ENCODE measurements at regions of chr3 and their contacts with region 1.

Region 1: GRCh38 chr3:105366326-105367062 is at the start of gene ALCAM:
- DNase-seq: peak; percentile 88
- ATAC-seq: peak; percentile 61
- H3K4me3 ChIP-seq: peak within 1 kb of the TSS; percentile 78 to 91 (median 88)
- H3K4me3 Mint-ChIP-seq: peak within 1 kb of the TSS; percentile 99
- H3K27ac ChIP-seq: peak within 1 kb of the TSS; percentile 98
- H3K27ac Mint-ChIP-seq: peak within 1 kb of the TSS; percentile 100
- H3K4me1 ChIP-seq: peaks cover 14 to 17% of the 10 kb centered on the region in 2 donors
- H3K4me1 Mint-ChIP-seq: peaks cover 32% of the 10 kb centered on the region
- H3K27me3 ChIP-seq: peaks cover 0 to 5% (median 0%) of the 10 kb centered on the region in 4 experiments
- H3K27me3 Mint-ChIP-seq: no peaks in the 10 kb centered on the region
- CTCF ChIP-seq: peak; percentile 1
- total RNA-seq, gene ALCAM: 23.8 and 25.5 TPM in 2 replicates

Region 2: GRCh38 chr3:104273046-104273649 is 1093.3 kb before region 1 on chr3:
- CTCF ChIA-PET with region 1: interaction called, 10 read pairs
- POLR2A ChIA-PET with region 1: interaction called, 3 read pairs
- intact Hi-C with region 1: loop called (anchors 1 kb)
- DNase-seq: peak; percentile 50
- ATAC-seq: no peak
- H3K4me3 ChIP-seq: no peak overlapping the region
- H3K4me3 Mint-ChIP-seq: no peak overlapping the region
- H3K27ac ChIP-seq: no peak overlapping the region
- H3K27ac Mint-ChIP-seq: no peak overlapping the region
- H3K4me1 ChIP-seq: no peaks in the 10 kb centered on the region
- H3K4me1 Mint-ChIP-seq: no peaks in the 10 kb centered on the region
- H3K27me3 ChIP-seq: no peaks in the 10 kb centered on the region
- H3K27me3 Mint-ChIP-seq: no peaks in the 10 kb centered on the region
- CTCF ChIP-seq: peak; percentile 81

Region 3: GRCh38 chr3:104596551-104596950 is 769.9 kb before region 1 on chr3:
- CTCF ChIA-PET with region 1: interaction called, 21 read pairs
- POLR2A ChIA-PET with region 1: no interaction called
- intact Hi-C with region 1: loop called (anchors 1 kb)
- DNase-seq: peak; percentile 59
- ATAC-seq: peak; percentile 63
- H3K4me3 ChIP-seq: no peak overlapping the region
- H3K4me3 Mint-ChIP-seq: no peak overlapping the region
- H3K27ac ChIP-seq: no peak overlapping the region
- H3K27ac Mint-ChIP-seq: no peak overlapping the region
- H3K4me1 ChIP-seq: no peaks in the 10 kb centered on the region
- H3K4me1 Mint-ChIP-seq: peaks cover 3% of the 10 kb centered on the region
- H3K27me3 ChIP-seq: no peaks in the 10 kb centered on the region
- H3K27me3 Mint-ChIP-seq: no peaks in the 10 kb centered on the region
- CTCF ChIP-seq: peak; percentile 69

Region 4: DNA sequence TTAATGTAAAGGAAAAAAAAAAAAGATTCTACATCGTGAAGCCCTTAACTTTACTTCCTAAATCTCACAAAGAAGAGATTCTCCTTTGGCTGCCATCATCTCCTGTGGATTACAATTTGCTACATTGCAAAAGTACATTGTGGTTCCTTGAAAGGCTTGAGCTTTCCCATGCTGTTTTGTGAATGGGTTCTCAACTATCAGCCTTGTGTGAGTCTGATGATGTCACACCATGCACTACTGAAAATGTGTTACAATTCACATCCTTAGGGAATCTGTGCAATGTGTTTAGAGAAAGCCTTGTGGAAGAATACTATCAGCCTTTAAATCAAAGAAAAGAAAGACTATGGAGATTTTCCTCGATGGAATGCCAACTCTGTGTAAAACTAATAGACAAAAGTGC is 509.8 kb before region 1 on chr3:
- CTCF ChIA-PET with region 1: no interaction called
- POLR2A ChIA-PET with region 1: no interaction called
- intact Hi-C with region 1: no loop called
- DNase-seq: no peak
- ATAC-seq: no peak
- H3K4me3 ChIP-seq: no peak overlapping the region
- H3K4me3 Mint-ChIP-seq: no peak overlapping the region
- H3K27ac ChIP-seq: no peak overlapping the region
- H3K27ac Mint-ChIP-seq: no peak overlapping the region
- H3K4me1 ChIP-seq: no peaks in the 10 kb centered on the region
- H3K4me1 Mint-ChIP-seq: no peaks in the 10 kb centered on the region
- H3K27me3 ChIP-seq: no peaks in the 10 kb centered on the region
- H3K27me3 Mint-ChIP-seq: peaks cover 3% of the 10 kb centered on the region
- CTCF ChIP-seq: no peak

Region 5: GRCh38 chr3:105385819-105386508 is 19.5 kb after region 1 on chr3:
- CTCF ChIA-PET with region 1: interaction called, 3 read pairs
- POLR2A ChIA-PET with region 1: no interaction called
- intact Hi-C with region 1: loop called (anchors 2 kb)
- DNase-seq: peak; percentile 31
- ATAC-seq: peak; percentile 57
- H3K4me3 ChIP-seq: no peak overlapping the region
- H3K4me3 Mint-ChIP-seq: peak overlapping the region; percentile 46
- H3K27ac ChIP-seq: peak overlapping the region; percentile 5 to 72
- H3K27ac Mint-ChIP-seq: peak overlapping the region; percentile 21
- H3K4me1 ChIP-seq: peaks cover 14 to 31% of the 10 kb centered on the region in 2 donors
- H3K4me1 Mint-ChIP-seq: peaks cover 41% of the 10 kb centered on the region
- H3K27me3 ChIP-seq: no peaks in the 10 kb centered on the region
- H3K27me3 Mint-ChIP-seq: no peaks in the 10 kb centered on the region
- CTCF ChIP-seq: no peak

Region 6: GRCh38 chr3:105868742-105869530 is 502.4 kb after region 1 on chr3 and contains the start of gene CBLB:
- CTCF ChIA-PET with region 1: no interaction called
- POLR2A ChIA-PET with region 1: no interaction called
- intact Hi-C with region 1: loop called (anchors 2 kb)
- DNase-seq: peak; percentile 93
- ATAC-seq: peak; percentile 90
- H3K4me3 ChIP-seq: peak within 1 kb of the TSS; percentile 72 to 100 (median 97)
- H3K4me3 Mint-ChIP-seq: peak within 1 kb of the TSS; percentile 93
- H3K27ac ChIP-seq: peak within 1 kb of the TSS; percentile 68 to 73
- H3K27ac Mint-ChIP-seq: peak within 1 kb of the TSS; percentile 96
- H3K4me1 ChIP-seq: peaks cover 24 to 32% of the 10 kb centered on the region in 2 donors
- H3K4me1 Mint-ChIP-seq: peaks cover 48% of the 10 kb centered on the region
- H3K27me3 ChIP-seq: no peaks in the 10 kb centered on the region
- H3K27me3 Mint-ChIP-seq: no peaks in the 10 kb centered on the region
- CTCF ChIP-seq: no peak
- total RNA-seq, gene CBLB: 135 and 144 TPM in 2 replicates

Measured in B cell (primary cell).